GM23248 (cell line): ENCODE measurements at regions of chr12 and their contacts with region 1.

Region 1: DNA sequence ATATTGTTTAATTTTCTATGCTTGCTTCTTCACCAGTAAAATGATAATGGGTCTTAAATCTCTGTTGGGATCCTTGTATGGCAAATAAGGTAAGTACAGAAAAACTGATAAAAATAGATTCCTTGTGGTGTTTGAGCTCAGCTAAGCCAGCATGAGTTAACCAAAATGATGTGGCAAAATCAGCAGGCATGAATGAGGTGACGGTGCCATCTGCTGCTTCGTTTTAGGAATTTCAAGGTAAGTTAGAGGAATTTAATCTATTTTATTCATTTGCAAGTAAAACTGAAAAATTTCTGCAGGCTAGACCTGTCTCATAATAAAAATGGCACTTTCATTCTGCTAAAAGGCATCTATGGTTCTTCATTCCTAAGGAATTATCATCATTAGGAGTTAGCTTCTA is 10.0 kb upstream of the CLEC7A start:
- DNase-seq: peak; percentile 80
- H3K4me3 ChIP-seq: no peak overlapping the region
- H3K27ac ChIP-seq: no peak overlapping the region
- H3K4me1 ChIP-seq: peaks cover 14% of the 10 kb centered on the region
- H3K27me3 ChIP-seq: no peaks in the 10 kb centered on the region

Region 2: DNA sequence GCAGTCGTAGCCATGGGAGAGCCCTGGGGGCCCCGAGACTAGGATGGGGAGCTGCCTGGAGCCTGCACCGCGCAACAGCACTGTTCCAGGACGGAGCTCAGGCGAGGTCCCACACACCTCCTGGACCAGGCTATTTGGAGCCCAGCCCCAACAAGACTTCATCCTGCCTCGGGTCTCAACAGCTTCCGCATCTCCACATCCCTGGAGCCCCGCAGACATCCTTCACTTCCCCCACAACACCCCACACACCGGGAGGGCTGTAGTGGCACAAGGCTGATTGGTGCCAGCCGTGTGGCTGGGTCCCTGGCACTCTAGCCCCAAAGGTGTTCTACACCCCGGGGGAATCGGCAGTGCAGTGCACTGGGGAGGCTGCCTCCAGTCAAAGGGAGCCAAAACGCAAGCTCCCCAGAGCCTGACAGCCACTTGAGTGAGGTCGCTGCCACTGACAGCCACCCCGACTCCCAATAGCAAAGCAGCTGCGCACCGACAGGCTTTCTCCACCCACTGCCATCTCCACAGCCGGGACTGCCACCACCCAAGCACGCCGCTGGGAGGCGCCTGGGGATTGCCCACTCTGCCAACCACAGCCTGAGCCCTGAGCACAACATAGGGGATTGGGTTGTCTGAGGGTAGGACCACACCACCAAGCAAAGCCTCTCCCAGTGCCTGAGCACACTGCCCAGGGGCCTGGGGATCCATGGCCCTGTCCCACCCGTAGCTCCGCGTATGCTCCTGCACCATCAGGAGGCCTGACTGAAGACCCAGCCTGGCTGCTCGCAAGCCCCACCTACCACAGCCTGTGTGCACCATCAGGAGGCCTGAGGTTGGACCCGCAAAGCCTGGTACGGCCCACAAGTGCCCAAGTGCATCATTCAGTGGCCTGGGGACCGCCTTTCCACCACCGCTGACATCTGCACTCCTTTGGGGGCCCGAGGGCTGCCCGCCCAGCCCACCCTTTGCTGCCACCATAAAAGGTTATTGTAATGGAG is 325.9 kb before region 1 on chr12:
- in situ Hi-C with region 1: loop called (anchors 25 kb)
- DNase-seq: peak; percentile 67
- H3K4me3 ChIP-seq: peak overlapping the region; percentile 43
- H3K27ac ChIP-seq: no peak overlapping the region
- H3K4me1 ChIP-seq: no peaks in the 10 kb centered on the region
- H3K27me3 ChIP-seq: peaks cover 9% of the 10 kb centered on the region